PC-3 (cell line): ENCODE measurements at regions of chr17 and their contacts with region 1.

Region 1: DNA sequence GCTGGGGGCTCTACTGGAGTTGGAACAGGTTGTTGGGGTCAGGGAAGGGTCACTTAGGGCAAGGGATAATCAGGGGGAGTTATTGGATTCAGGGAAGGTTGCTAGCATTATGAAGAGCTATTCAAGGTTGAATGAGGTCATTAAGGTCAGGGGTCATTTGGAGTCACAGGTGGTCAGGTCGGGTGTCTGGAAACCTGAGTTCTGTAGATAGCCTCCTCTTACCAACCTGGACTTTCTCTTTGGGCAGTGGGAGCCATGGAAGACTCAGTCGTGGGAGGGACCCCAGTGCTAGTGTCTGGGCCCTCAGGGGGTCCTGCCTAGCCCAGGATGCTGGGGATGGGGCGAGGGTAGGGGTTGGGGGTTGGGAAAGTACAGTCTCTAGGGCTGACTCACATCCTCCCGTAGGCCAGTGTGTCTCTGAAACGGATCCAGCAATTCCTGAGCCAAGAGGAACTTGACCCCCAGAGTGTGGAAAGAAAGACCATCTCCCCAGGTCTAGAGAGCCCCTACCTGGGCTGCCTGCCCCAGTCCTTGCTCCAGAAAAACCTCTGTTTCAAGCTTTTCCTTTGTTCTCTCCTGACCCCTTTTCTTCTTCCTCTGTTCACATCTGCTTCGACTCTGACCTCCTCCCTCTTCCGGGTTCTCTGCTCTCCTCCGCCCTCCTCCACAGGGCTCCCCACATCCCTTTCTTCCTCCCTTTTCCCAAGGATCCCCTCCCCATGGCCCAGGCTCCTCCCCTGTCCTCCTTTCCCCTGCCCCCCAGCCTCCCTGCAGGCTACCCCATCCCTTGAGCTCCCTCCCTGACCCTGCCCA is 33.5 kb downstream of the ABCC3 start:
- DNase-seq: peak; percentile 39
- ATAC-seq: peak; percentile 47
- H3K4me3 ChIP-seq: no peak overlapping the region
- H3K27ac ChIP-seq: no peak overlapping the region
- H3K4me1 ChIP-seq: peaks cover 20% of the 10 kb centered on the region
- H3K27me3 ChIP-seq: no peaks in the 10 kb centered on the region
- CTCF ChIP-seq: no peak

Region 2: GRCh38 chr17:50487213-50488096 is 180.8 kb before region 1 on chr17:
- CTCF ChIA-PET with region 1: no interaction called
- POLR2A ChIA-PET with region 1: interaction called, 15 read pairs
- intact Hi-C with region 1: no loop called
- DNase-seq: peak; percentile 90
- ATAC-seq: peak; percentile 96
- H3K4me3 ChIP-seq: no peak overlapping the region
- H3K27ac ChIP-seq: no peak overlapping the region; the same call in 1 of the 2 replicates
- H3K4me1 ChIP-seq: peaks cover 22% of the 10 kb centered on the region
- H3K27me3 ChIP-seq: no peaks in the 10 kb centered on the region
- CTCF ChIP-seq: no peak